OCI-LY7 (cell line): ENCODE measurements at regions of chr2 and their contacts with region 1.

Region 1: DNA sequence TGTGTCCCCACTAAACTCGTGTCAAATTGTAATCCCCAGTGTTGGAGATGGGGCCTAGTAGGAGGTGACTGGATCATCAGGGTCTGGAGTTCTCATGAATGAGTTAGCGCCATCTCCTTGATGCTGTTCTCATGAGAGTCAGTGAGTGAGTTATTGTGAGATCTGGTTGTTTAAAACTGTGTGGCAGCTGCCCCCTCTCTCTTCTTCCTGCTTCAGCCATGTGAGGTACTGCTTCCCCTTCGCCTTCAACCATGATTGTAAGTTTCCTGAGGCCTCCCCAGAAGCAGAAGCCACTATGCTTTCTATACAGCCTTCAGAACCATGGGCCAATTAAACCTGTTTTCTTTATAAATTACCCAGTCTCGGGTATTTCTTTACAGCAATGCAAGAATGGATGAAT is 50.4 kb downstream of the AP1S3 start:
- DNase-seq: peak; percentile 58
- H3K4me3 ChIP-seq: no peak overlapping the region
- H3K27ac ChIP-seq: peak overlapping the region; percentile 20
- H3K4me1 ChIP-seq: peaks cover 16% of the 10 kb centered on the region
- CTCF ChIP-seq: no peak

Region 2: DNA sequence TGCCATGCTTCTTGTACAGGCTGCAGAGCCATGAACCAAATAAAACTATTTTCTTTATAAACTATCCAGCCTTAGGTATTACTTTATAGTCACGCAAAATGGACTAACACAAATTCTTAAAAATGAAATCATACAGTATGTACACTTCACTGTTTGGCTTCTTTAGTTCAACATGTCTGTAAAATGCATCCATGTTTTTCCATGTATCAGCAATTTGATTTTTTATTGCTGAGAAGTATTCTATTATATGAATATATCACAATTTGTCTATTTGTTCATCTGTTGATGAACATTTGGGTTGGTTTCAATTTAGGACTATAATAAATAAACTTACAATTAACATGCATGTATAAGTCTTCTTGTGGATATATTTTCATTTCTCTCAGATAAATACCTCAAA is 366.9 kb before region 1 on chr2:
- CTCF ChIA-PET with region 1: no interaction called
- POLR2A ChIA-PET with region 1: no interaction called
- intact Hi-C with region 1: no loop called
- DNase-seq: no peak
- H3K4me3 ChIP-seq: no peak overlapping the region
- H3K27ac ChIP-seq: no peak overlapping the region
- H3K4me1 ChIP-seq: no peaks in the 10 kb centered on the region
- CTCF ChIP-seq: no peak

Region 3: DNA sequence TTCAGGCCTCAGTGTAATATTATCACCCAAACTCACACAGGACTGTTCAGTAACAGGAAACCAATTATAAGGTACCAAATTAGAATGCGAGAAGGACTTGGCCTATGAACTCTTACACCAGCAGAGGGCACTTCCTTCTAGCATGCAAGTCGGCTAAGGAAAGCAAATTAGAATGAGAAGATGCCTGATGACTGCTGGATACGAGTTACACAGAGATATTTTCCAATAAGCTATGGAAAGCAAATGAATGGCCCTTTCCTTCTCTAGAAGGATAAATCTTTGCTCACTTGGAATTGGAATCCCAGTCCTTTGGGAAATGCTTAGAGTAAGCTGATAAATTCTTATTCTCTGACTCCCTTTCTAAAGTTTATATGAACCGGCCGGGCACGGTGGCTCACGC is 59.4 kb before region 1 on chr2:
- CTCF ChIA-PET with region 1: no interaction called
- POLR2A ChIA-PET with region 1: no interaction called
- intact Hi-C with region 1: loop called (anchors 5 kb)
- DNase-seq: peak; percentile 81
- H3K4me3 ChIP-seq: no peak overlapping the region
- H3K27ac ChIP-seq: no peak overlapping the region
- H3K4me1 ChIP-seq: peaks cover 3% of the 10 kb centered on the region
- CTCF ChIP-seq: peak; percentile 88

Region 4: GRCh38 chr2:223797811-223798721 is 11.1 kb after region 1 on chr2:
- CTCF ChIA-PET with region 1: no interaction called
- POLR2A ChIA-PET with region 1: interaction called, 11 read pairs
- intact Hi-C with region 1: no loop called
- DNase-seq: peak; percentile 83
- H3K4me3 ChIP-seq: peak overlapping the region; percentile 22
- H3K27ac ChIP-seq: peak overlapping the region; percentile 22
- H3K4me1 ChIP-seq: peaks cover 44% of the 10 kb centered on the region
- CTCF ChIP-seq: peak; percentile 72